T-cell (primary cell): ENCODE measurements at regions of chr19 and their contacts with region 1.

Region 1: DNA sequence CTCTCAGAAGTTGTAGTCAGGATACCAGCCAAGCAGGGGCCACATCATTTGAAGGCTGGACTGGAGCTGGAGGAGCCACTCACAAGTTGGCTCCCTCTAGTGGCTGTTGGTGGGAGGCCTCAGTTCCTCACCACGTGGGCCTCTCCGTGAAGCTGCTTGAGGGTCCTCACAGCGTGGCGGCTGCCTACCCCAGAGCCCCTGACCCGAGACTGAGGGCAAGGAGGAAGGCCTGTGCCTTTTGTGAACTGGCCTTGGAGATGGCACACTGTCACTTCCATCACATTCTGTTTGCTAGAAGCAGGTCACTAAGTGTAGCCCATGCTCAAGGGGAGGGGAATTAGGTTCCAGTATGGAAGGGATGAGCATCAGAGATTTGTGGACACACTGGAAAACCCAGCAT is 14.6 kb downstream of the GNA11 start:
- DNase-seq: peak in 34 of 35 experiments; percentile 25 to 84 (median 60)
- ATAC-seq: peak; percentile 56 to 74 (median 63)
- H3K4me3 ChIP-seq: no peak overlapping the region
- H3K4me3 Mint-ChIP-seq: no peak overlapping the region
- H3K27ac ChIP-seq: no peak overlapping the region
- H3K27ac Mint-ChIP-seq: peak overlapping the region in 1 of 2 donors; percentile 74
- H3K4me1 ChIP-seq: peaks cover 0 to 12% of the 10 kb centered on the region in 2 experiments
- H3K4me1 Mint-ChIP-seq: peaks cover 11 to 21% (median 13%) of the 10 kb centered on the region in 3 donors
- H3K27me3 ChIP-seq: peaks cover 0 to 8% of the 10 kb centered on the region in 2 experiments
- H3K27me3 Mint-ChIP-seq: no peaks in the 10 kb centered on the region

Region 2: DNA sequence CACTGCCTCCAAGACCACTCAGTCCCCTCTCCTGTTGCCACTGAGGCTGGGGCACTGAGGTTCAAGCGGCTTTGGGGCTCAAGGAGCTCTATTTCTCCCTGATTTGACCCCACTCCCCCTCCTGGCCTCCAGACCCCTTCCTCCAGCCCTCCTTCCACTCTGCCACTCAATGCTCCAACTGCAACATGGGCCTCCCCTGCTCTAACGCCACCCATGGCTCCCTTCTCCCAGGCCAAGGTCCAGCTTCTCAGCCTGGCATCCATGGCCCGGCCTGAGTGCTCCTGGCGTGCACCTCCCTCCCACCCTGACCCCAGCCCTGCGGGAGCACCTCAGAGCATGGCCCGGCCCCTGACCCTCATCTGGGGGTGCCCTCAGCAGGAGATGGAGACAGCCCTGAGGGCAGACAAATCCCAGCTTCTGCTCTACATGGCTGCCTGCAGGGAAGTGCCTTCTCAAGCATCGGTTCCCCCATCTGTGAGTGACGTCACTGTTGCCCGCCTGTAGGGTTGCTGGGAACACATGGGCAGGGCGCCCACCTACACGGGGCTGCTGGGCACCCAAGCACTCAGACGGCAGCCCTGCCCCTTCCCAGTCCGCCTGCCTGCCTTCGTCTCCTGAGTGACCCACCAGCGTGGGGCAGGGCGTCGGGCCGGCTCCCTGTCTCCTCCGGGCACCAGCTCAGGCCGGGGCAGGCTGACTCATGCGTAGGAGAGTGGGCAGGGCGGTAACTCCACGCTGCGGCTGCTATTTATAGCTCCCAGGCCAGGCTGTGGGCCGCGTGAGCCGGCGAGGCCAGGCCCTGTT is 386.0 kb before region 1 on chr19:
- CTCF ChIA-PET with region 1: no interaction called
- POLR2A ChIA-PET with region 1: no interaction called
- DNase-seq: no peak
- ATAC-seq: no peak
- H3K4me3 ChIP-seq: no peak overlapping the region
- H3K4me3 Mint-ChIP-seq: peak overlapping the region in 1 of 3 donors; percentile 49
- H3K27ac ChIP-seq: no peak overlapping the region
- H3K27ac Mint-ChIP-seq: no peak overlapping the region
- H3K4me1 ChIP-seq: peaks cover 2 to 23% of the 10 kb centered on the region in 2 experiments
- H3K4me1 Mint-ChIP-seq: peaks cover 0 to 11% (median 7%) of the 10 kb centered on the region in 3 donors
- H3K27me3 ChIP-seq: peaks cover 3 to 82% of the 10 kb centered on the region in 2 experiments
- H3K27me3 Mint-ChIP-seq: peaks cover 22 to 58% of the 10 kb centered on the region in 2 donors

Region 3: GRCh38 chr19:3075895-3076431 is 32.8 kb before region 1 on chr19:
- CTCF ChIA-PET with region 1: interaction called, 8 to 17 read pairs
- POLR2A ChIA-PET with region 1: no interaction called
- DNase-seq: peak; percentile 38 to 89 (median 71)
- ATAC-seq: peak; percentile 94 to 97 (median 96)
- H3K4me3 ChIP-seq: peak overlapping the region in 1 of 2 donors; percentile 6
- H3K4me3 Mint-ChIP-seq: peak overlapping the region in 1 of 3 donors; percentile 43
- H3K27ac ChIP-seq: no peak overlapping the region
- H3K27ac Mint-ChIP-seq: no peak overlapping the region
- H3K4me1 ChIP-seq: peaks cover 2 to 11% of the 10 kb centered on the region in 2 experiments
- H3K4me1 Mint-ChIP-seq: peaks cover 6 to 7% (median 7%) of the 10 kb centered on the region in 3 donors
- H3K27me3 ChIP-seq: peaks cover 0 to 17% of the 10 kb centered on the region in 2 experiments
- H3K27me3 Mint-ChIP-seq: no peaks in the 10 kb centered on the region

Region 4: DNA sequence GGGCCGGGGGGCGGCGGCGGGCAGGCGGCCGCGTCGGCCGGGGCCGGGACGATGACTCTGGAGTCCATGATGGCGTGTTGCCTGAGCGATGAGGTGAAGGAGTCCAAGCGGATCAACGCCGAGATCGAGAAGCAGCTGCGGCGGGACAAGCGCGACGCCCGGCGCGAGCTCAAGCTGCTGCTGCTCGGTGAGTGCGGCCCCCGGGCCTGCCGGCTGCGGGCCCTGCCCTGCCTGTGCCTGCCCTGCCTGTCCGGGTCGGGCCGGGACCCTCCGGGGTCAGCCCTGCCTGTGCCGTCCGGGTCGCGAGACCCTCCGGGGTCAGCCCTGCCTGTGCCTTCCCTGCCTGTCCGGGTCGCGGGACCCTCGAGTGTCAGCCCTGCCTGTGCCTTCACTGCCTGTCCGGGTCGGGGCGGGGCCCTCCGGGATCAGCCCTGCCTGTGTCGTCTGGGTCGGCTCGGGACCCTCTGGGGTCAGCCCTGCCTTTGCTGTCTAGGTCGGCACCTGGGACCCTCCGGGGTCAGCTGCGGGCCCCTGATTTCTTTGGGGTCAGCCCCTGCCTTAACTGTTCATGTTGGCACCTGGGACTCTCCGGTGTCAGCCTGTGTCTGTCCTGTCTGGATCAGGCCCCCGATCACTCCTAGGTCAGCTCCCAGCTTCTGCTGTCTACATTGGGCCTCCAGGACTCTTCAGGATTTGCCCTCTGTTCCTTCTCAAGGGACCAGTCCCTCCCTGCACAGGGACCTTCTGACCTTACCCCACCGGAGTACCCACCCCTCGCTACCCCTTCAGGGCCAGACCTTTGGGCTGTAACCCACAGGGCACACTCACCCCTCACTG is 14.0 kb before region 1 on chr19:
- CTCF ChIA-PET with region 1: interaction called in 1 of 2 experiments, 9 read pairs
- POLR2A ChIA-PET with region 1: interaction called in 1 of 2 experiments, 12 read pairs
- DNase-seq: peak in 18 of 35 experiments; percentile 13 to 57 (median 27)
- ATAC-seq: peak in 2 of 4 experiments; percentile 21 to 30
- H3K4me3 ChIP-seq: peak overlapping the region; percentile 41 to 74
- H3K4me3 Mint-ChIP-seq: peak overlapping the region; percentile 69 to 88 (median 71)
- H3K27ac ChIP-seq: no peak overlapping the region
- H3K27ac Mint-ChIP-seq: peak overlapping the region in 1 of 2 donors; percentile 48
- H3K4me1 ChIP-seq: peaks cover 10 to 43% of the 10 kb centered on the region in 2 experiments
- H3K4me1 Mint-ChIP-seq: peaks cover 27 to 37% (median 28%) of the 10 kb centered on the region in 3 donors
- H3K27me3 ChIP-seq: peaks cover 0 to 62% of the 10 kb centered on the region in 2 experiments
- H3K27me3 Mint-ChIP-seq: peaks cover 0 to 29% of the 10 kb centered on the region in 2 donors